Activated CD4-positive, alpha-beta T cell treated with anti-CD3 and anti-CD28 coated beads, Interleukin-2, amount 10 ng/mL, durations not matched to agents 24 days and 14 days (primary cell): ENCODE measurements at regions of chr1 and their contacts with region 1.

Region 1: GRCh38 chr1:184163674-184164465 is 112.3 kb downstream of the TSEN15 start:
- DNase-seq: peak; percentile 61
- H3K4me3 Mint-ChIP-seq: no peak overlapping the region
- H3K27ac Mint-ChIP-seq: no peak overlapping the region
- H3K4me1 Mint-ChIP-seq: peaks cover 16% of the 10 kb centered on the region
- H3K27me3 Mint-ChIP-seq: peaks cover 2% of the 10 kb centered on the region

Region 2: GRCh38 chr1:183628537-183628936 is 535.3 kb before region 1 on chr1:
- intact Hi-C with region 1: loop called (anchors 2 kb)
- DNase-seq: no peak
- H3K4me3 Mint-ChIP-seq: peak overlapping the region; percentile 7
- H3K27ac Mint-ChIP-seq: peak overlapping the region; percentile 15
- H3K4me1 Mint-ChIP-seq: peaks cover 37% of the 10 kb centered on the region
- H3K27me3 Mint-ChIP-seq: no peaks in the 10 kb centered on the region

Region 3: GRCh38 chr1:183655562-183656075 is 508.3 kb before region 1 on chr1:
- intact Hi-C with region 1: loop called (anchors 2 kb)
- DNase-seq: peak; percentile 92
- H3K4me3 Mint-ChIP-seq: no peak overlapping the region
- H3K27ac Mint-ChIP-seq: peak overlapping the region; percentile 30
- H3K4me1 Mint-ChIP-seq: peaks cover 35% of the 10 kb centered on the region
- H3K27me3 Mint-ChIP-seq: peaks cover 4% of the 10 kb centered on the region

Region 4: GRCh38 chr1:183841950-183842794 is 321.7 kb before region 1 on chr1:
- intact Hi-C with region 1: loop called (anchors 2 kb)
- DNase-seq: peak; percentile 78
- H3K4me3 Mint-ChIP-seq: peak overlapping the region; percentile 65
- H3K27ac Mint-ChIP-seq: peak overlapping the region; percentile 93
- H3K4me1 Mint-ChIP-seq: peaks cover 26% of the 10 kb centered on the region
- H3K27me3 Mint-ChIP-seq: no peaks in the 10 kb centered on the region

Region 5: GRCh38 chr1:184075055-184076029 is 88.5 kb before region 1 on chr1:
- intact Hi-C with region 1: loop called (anchors 2 kb)
- DNase-seq: peak; percentile 78
- H3K4me3 Mint-ChIP-seq: no peak overlapping the region
- H3K27ac Mint-ChIP-seq: no peak overlapping the region
- H3K4me1 Mint-ChIP-seq: peaks cover 12% of the 10 kb centered on the region
- H3K27me3 Mint-ChIP-seq: no peaks in the 10 kb centered on the region

Region 6: DNA sequence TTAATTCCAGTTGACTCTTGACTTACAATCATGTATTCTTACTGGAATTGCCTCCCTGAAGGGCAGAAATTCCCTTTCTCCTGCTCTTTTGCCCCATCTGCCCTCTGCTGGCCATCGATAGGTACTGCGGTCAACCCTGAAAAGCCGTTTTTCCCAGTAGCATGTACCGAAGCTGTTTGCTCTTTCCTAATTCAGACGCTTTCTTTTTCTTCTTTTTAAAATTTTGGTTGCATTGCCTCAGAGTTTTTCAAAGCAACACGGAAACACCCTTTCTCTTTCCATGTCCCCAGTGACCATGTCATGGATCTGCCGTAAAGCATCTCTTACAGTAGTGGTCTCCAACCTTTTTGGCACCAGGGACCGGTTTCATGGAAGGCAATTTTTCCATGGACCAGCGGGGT is 58.8 kb after region 1 on chr1:
- intact Hi-C with region 1: loop called (anchors 5 kb)
- DNase-seq: peak; percentile 82
- H3K4me3 Mint-ChIP-seq: no peak overlapping the region
- H3K27ac Mint-ChIP-seq: no peak overlapping the region
- H3K4me1 Mint-ChIP-seq: peaks cover 4% of the 10 kb centered on the region
- H3K27me3 Mint-ChIP-seq: peaks cover 12% of the 10 kb centered on the region

Region 7: DNA sequence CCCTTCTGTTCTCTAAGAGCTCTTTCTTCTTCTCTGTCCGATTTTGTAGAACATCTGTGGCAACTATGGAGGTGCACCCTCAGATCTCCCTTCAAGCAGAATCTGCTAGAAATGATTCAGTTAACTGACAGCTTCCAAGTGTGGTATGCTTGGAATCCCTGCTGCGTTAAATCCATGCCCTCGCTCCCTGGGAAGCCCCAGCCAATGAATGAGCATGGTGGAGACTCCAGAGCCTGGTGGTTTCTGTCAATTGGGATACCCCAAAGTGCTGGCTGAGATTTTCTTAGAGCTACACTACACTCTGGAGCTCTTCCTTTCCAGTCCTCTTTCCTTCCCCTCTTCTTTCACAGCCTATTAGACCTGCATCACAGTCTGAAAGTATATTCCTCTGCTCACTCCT is 106.7 kb after region 1 on chr1:
- intact Hi-C with region 1: no loop called
- DNase-seq: no peak
- H3K4me3 Mint-ChIP-seq: no peak overlapping the region
- H3K27ac Mint-ChIP-seq: no peak overlapping the region
- H3K4me1 Mint-ChIP-seq: no peaks in the 10 kb centered on the region
- H3K27me3 Mint-ChIP-seq: no peaks in the 10 kb centered on the region